ENCODE measurements at regions of chr2 and their contacts with region 1.

Region 1: DNA sequence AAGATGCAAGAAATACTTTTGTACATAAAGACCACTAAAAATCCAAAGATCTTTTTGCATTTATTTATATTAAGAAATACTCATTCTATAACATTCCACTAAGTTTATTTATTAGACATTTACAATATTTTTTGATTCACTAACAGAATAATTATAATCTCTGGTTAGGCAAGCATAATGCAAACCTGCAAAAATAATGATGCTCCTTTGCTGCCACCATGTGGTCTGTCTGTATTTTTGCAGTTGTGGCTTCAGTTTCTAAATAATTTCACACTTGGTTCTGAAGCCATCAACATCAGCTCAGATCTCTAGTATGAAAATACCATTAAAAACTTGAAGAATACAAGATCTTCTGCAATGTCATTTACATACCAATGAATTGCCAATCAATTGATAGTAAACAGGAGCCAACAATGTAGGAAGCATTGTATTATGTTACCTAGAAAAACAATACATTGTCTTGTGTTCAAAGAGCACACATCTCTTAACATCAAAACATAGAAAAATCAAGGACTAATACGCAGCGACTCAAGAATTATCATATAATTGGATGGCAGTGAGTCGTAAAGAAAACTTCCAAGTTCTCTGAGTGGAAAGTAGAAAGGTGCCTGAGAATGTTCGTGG is 28.8 kb upstream of the WDR75 start:
- DNase-seq: peak; percentile 56 to 66
- H3K4me3 ChIP-seq: no peak overlapping the region
- H3K4me1 ChIP-seq: peaks cover 30% of the 10 kb centered on the region
- H3K27me3 ChIP-seq: no peaks in the 10 kb centered on the region

Region 2: GRCh38 chr2:188524519-188525113 is 887.8 kb before region 1 on chr2:
- in situ Hi-C with region 1: loop called (anchors 10 kb)
- DNase-seq: peak; percentile 42 to 67
- H3K4me3 ChIP-seq: no peak overlapping the region
- H3K4me1 ChIP-seq: peaks cover 12% of the 10 kb centered on the region
- H3K27me3 ChIP-seq: no peaks in the 10 kb centered on the region

Region 3: DNA sequence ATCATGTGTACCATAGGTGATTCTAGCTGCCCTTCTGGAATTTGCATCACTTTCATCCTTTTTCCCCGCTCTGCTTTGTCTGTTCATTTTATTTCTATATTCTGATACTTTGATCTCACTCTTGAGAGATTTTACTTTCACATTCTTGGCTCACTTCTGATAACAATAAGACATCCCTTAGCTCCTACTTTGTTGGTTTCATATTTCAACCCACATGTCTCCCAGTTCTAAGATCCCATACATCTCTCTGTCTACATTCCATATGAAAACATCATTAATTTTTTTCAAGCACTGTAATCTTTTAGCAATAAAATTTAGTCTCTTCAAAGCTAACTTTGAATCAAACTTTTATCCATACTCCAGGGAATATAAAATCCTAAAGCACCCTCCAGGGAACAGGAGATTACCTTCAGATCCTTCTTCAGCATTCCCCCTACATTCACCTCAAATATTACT is 362.7 kb before region 1 on chr2:
- in situ Hi-C with region 1: no loop called
- DNase-seq: peak in 1 of 2 experiments; percentile 21
- H3K4me3 ChIP-seq: no peak overlapping the region
- H3K4me1 ChIP-seq: peaks cover 8% of the 10 kb centered on the region
- H3K27me3 ChIP-seq: no peaks in the 10 kb centered on the region

Region 4: GRCh38 chr2:189115126-189115525 is 297.3 kb before region 1 on chr2:
- in situ Hi-C with region 1: loop called (anchors 25 kb)
- DNase-seq: peak in 1 of 2 experiments; percentile 19
- H3K4me3 ChIP-seq: no peak overlapping the region
- H3K4me1 ChIP-seq: peaks cover 19% of the 10 kb centered on the region
- H3K27me3 ChIP-seq: no peaks in the 10 kb centered on the region

Region 5: GRCh38 chr2:189874586-189875320 is 462.3 kb after region 1 on chr2:
- in situ Hi-C with region 1: no loop called
- DNase-seq: no peak
- H3K4me3 ChIP-seq: no peak overlapping the region
- H3K4me1 ChIP-seq: no peaks in the 10 kb centered on the region
- H3K27me3 ChIP-seq: no peaks in the 10 kb centered on the region